ENCODE measurements at regions of chr1 and their contacts with region 1.

Region 1: GRCh38 chr1:150629115-150629928 is at the start of gene ENSA:
- H3K4me3 ChIP-seq: peak within 1 kb of the TSS; percentile 77
- H3K27ac ChIP-seq: peak within 1 kb of the TSS; percentile 61
- H3K4me1 ChIP-seq: no peaks in the 10 kb centered on the region
- CTCF ChIP-seq: no peak

Region 2: DNA sequence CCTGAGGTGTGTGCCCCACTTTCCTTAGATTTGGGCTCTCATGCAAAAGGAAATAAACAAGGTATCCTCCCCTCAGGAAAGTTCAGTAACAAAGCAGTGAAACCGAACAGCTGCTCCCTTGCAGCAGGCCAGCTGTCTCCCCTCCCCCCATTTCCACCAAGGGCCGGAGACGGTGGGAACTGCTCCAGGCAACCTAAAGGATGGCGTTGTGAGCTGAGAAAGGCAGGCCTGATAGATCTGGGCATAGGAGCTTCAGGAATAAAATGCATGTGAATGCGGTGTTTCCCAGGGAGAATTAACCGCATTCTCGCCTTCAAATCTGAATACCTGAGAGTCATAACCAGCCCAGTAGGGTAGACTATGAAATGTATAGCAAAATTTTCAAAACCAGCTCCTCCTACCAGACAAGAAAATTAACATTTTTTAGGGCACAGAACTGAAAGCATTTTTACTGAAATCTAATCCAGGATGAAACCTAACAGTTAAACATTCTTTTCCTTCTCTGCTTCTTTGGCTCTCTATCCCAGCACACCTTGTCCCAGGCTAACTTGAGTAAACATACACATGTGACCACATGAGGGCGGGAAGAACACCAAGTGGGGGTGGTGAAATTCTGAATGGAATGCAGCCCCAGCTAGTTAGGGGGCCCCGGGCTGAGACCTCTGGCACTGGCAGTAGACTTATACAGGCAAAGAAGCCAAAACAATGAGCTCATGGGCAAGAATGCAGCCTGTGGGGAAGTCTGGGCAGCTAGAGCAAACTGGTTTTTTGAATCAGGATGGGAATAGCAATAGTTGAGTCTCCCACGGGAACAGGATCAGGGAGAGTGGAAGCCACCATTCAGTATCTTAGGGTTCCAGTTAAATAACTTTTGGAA is 61.4 kb before region 1 on chr1:
- CTCF ChIA-PET with region 1: interaction called, 5 read pairs
- POLR2A ChIA-PET with region 1: interaction called, 15 read pairs
- H3K4me3 ChIP-seq: no peak overlapping the region
- H3K27ac ChIP-seq: peak overlapping the region; percentile 38
- H3K4me1 ChIP-seq: peaks cover 28% of the 10 kb centered on the region
- CTCF ChIP-seq: no peak

Region 3: DNA sequence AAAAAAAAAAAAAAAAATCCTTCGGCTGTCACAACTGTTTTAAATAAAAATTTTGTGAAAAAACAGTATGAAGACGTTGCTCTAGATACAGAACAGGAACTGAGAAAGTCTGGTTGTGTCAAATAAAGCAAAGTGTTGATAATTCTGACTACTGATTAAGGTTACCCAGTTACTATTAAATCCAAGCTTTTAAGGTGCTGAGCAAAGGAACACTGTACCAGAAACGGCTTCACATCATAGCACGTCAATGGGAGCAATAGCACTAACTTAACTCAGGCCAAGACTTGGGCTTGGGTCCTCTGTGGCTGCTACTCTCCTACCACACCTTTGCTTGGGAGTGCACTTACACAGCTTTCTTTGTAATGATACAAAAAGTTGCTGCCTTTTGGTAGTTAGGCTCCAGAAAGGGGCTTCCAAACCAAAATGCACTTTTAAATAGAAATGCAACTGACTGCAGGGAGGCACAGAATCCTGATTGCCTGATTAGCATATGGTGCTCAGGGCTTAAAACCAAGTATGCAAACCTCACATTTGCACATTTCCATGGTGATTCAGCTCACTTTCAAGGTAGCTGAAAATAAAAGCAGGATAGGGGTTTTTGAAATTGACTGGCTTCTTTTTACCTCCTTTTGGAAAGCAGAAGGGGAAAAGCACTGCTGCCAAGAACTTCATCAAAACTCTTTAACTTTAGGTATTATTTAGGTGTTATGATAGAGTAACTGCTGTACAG is 56.2 kb before region 1 on chr1:
- CTCF ChIA-PET with region 1: no interaction called
- POLR2A ChIA-PET with region 1: interaction called, 56 read pairs
- H3K4me3 ChIP-seq: no peak overlapping the region
- H3K27ac ChIP-seq: no peak overlapping the region
- H3K4me1 ChIP-seq: peaks cover 9% of the 10 kb centered on the region
- CTCF ChIP-seq: no peak

Region 4: GRCh38 chr1:150642296-150642695 is 13.0 kb after region 1 on chr1:
- CTCF ChIA-PET with region 1: interaction called, 3 read pairs
- POLR2A ChIA-PET with region 1: interaction called, 10 read pairs
- H3K4me3 ChIP-seq: no peak overlapping the region
- H3K27ac ChIP-seq: no peak overlapping the region
- H3K4me1 ChIP-seq: no peaks in the 10 kb centered on the region
- CTCF ChIP-seq: no peak

Region 5: DNA sequence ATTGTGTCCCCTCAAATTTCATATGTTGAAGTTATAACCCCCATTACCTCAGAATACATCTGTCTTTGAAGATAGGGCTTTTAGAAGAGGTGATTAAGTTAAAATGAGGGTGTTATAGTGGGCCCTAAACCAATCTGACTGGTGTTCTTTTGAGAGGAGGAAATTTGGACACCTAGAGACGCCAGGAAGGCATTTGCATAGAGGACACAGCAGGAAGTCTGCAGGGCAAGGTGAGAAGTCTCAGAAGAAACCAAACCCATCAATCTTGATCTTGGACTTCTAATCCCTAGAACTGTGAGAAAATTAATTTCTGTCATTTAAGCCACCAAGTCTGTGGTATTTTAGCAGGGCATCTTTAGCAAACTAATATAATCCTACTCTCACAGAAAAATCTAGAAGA is 54.6 kb after region 1 on chr1:
- CTCF ChIA-PET with region 1: no interaction called
- POLR2A ChIA-PET with region 1: no interaction called
- H3K4me3 ChIP-seq: no peak overlapping the region
- H3K27ac ChIP-seq: no peak overlapping the region
- H3K4me1 ChIP-seq: no peaks in the 10 kb centered on the region
- CTCF ChIP-seq: no peak

Region 6: GRCh38 chr1:150696590-150697524 is 67.5 kb after region 1 on chr1 and contains the start of gene GOLPH3L:
- CTCF ChIA-PET with region 1: no interaction called
- POLR2A ChIA-PET with region 1: interaction called, 30 read pairs
- H3K4me3 ChIP-seq: peak within 1 kb of the TSS; percentile 63
- H3K27ac ChIP-seq: peak within 1 kb of the TSS; percentile 29; the same call in 1 of the 2 replicates
- H3K4me1 ChIP-seq: no peaks in the 10 kb centered on the region
- CTCF ChIP-seq: no peak